Activated B cell treated with CpG ODN at 0.5 μM for 24 hours (primary cell): ENCODE measurements at regions of chr1 and their contacts with region 1.

Region 1: DNA sequence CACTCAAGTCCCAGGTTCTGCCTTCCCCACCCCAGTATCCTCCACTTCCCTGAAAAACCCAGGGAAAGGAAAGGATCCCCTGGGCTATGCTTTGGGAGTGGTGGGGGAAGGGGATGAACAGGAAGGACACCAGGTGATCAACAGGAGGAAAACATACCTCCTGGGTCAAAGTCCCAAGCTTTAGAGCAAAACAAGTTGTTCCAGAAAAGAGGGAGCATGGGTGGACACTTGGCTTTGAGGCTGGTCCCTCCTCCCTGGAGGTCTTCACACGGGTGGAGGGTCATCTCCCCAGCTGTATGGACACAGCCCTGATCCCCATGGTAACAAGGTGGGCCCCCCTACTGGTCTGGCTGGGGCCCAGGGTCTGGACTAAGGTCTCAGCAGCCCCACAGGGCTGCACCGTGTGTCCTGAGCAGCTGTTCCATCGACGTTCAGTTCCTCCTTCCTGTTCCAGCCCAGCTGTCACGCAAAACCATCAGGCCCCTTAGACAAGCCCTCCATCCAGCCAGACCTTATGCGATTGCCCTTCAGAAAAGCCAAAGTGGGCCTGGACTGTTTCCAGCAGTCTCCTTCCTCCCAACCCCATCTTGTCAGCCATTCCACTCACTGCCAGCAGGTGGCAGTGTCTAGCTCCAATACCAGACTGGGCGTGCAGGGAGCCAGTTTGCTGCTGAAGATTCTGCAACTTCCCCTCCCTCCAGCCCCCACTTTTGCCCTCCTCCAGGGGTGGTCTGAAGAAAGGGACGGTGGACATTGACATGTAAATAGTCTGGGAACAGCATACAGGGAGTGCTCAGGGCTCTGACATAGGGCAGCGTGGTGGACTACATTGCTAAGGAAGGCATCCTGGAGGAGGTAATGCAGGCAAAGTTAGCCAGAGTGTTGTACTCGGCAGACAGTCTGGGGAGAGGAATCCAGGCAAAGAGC is 2.9 kb upstream of the PDZK1IP1 start:
- DNase-seq: peak; percentile 61
- ATAC-seq: peak; percentile 75
- H3K4me3 Mint-ChIP-seq: no peak overlapping the region
- H3K27ac Mint-ChIP-seq: no peak overlapping the region
- H3K4me1 Mint-ChIP-seq: no peaks in the 10 kb centered on the region
- H3K27me3 Mint-ChIP-seq: peaks cover 16% of the 10 kb centered on the region
- CTCF ChIP-seq: peak; percentile 18

Region 2: DNA sequence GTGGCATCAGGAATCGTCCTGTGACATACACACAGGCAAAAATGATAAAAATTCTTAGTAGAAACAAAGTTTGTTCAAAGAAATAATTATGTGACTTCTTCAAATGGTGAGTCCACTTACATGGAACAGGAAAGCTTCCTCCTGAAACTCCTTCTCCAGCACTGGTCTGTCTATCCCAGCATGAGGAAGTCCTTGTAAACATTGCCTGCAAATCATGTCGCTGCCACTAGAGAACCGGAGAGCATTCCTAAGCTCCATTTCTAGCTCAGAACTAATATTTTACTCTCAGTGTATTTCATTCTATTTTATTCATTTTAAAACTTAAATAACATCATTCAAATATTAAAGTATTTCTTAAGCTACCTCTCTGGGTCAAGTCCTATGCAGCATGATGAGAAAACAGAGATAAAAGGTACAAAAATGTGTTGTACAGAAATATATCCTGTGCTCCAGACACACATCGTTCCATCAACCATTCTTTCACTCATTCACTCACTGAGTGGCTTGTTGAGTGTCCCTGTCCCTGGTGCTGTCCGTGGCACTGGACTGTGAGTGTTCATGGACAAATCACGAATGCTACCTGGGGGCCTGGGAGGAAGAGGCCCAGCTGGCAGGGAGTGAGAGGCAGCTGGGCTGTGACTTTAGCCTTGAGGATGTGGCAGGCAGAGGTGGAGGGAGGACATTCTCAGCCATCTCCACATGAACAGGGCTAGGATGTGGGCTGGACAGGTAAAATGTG is 45.5 kb before region 1 on chr1:
- CTCF ChIA-PET with region 1: no interaction called
- POLR2A ChIA-PET with region 1: no interaction called
- intact Hi-C with region 1: no loop called
- DNase-seq: no peak
- ATAC-seq: no peak
- H3K4me3 Mint-ChIP-seq: no peak overlapping the region
- H3K27ac Mint-ChIP-seq: no peak overlapping the region
- H3K4me1 Mint-ChIP-seq: no peaks in the 10 kb centered on the region
- H3K27me3 Mint-ChIP-seq: peaks cover 15% of the 10 kb centered on the region
- CTCF ChIP-seq: no peak

Region 3: GRCh38 chr1:47262787-47263413 is 70.2 kb after region 1 on chr1:
- CTCF ChIA-PET with region 1: interaction called, 23 read pairs
- POLR2A ChIA-PET with region 1: no interaction called
- intact Hi-C with region 1: loop called (anchors 2 kb)
- DNase-seq: no peak
- ATAC-seq: no peak
- H3K4me3 Mint-ChIP-seq: no peak overlapping the region
- H3K27ac Mint-ChIP-seq: no peak overlapping the region
- H3K4me1 Mint-ChIP-seq: no peaks in the 10 kb centered on the region
- H3K27me3 Mint-ChIP-seq: no peaks in the 10 kb centered on the region
- CTCF ChIP-seq: no peak

Region 4: GRCh38 chr1:47424336-47424982 is 231.7 kb after region 1 on chr1:
- CTCF ChIA-PET with region 1: interaction called, 6 read pairs
- POLR2A ChIA-PET with region 1: no interaction called
- intact Hi-C with region 1: loop called (anchors 1 kb)
- DNase-seq: no peak
- ATAC-seq: no peak
- H3K4me3 Mint-ChIP-seq: no peak overlapping the region
- H3K27ac Mint-ChIP-seq: no peak overlapping the region
- H3K4me1 Mint-ChIP-seq: no peaks in the 10 kb centered on the region
- H3K27me3 Mint-ChIP-seq: peaks cover 44% of the 10 kb centered on the region
- CTCF ChIP-seq: no peak

Region 5: DNA sequence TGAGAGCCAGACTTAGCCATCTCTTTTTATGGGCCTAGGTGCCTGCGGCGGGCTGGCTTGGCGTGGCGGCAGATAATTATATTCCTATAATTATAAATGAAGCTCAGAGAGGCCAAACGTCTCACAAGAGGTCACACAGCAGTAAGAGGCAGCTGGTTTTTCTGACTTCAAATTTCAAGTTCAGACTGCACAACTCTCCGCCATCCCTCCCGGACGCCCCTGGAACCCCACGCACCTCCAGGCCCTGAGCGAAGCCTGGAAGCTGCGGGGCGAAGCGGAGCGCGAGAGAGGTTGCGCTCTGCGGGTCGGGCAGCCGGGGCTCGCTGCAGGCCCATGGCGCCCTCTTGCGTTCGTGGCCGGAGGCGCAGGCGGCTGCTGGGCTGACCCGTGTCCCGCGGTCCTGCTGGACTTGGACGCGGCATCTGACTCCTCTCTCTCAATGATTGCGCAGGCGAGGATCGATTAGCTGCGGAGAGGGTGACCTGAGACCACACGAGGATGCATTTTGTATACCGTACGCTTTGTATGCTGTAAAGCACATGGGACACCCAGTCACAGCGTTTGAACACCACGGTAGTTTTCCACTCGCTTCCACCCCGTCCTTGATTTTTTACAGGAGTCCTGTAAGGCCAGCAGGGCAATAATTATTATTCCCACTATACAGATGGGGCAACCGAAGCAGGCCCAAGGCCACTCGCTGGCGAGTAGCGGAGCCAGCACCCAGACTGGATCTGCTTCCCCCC is 517.8 kb after region 1 on chr1:
- CTCF ChIA-PET with region 1: interaction called, 16 read pairs
- POLR2A ChIA-PET with region 1: no interaction called
- intact Hi-C with region 1: loop called (anchors 1 kb)
- DNase-seq: peak; percentile 56
- ATAC-seq: peak; percentile 52
- H3K4me3 Mint-ChIP-seq: no peak overlapping the region
- H3K27ac Mint-ChIP-seq: no peak overlapping the region
- H3K4me1 Mint-ChIP-seq: peaks cover 15% of the 10 kb centered on the region
- H3K27me3 Mint-ChIP-seq: peaks cover 62% of the 10 kb centered on the region
- CTCF ChIP-seq: peak; percentile 57

Region 6: DNA sequence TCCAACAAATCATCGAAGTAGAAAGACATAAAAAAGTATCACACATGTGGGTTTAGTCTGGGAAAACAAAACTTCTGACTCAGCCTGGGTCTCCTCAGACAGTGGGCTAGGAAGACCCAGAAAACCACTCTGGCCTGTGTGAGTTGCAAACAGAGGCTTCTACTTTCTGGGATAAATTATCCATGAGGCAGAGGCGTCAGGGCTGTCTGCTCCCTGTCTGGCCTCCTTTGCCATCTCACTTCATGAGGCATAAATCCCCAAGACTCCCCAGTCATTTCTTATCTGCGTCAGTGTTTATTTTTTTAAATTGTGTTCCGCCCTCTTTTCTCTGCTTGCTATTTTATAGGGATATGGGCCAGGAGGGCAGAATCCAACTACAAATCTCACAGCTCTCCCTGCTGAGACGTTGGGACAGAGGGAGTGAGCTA is 885.1 kb after region 1 on chr1:
- CTCF ChIA-PET with region 1: no interaction called
- POLR2A ChIA-PET with region 1: no interaction called
- intact Hi-C with region 1: no loop called
- DNase-seq: no peak
- ATAC-seq: no peak
- H3K4me3 Mint-ChIP-seq: no peak overlapping the region
- H3K27ac Mint-ChIP-seq: no peak overlapping the region
- H3K4me1 Mint-ChIP-seq: peaks cover 3% of the 10 kb centered on the region
- H3K27me3 Mint-ChIP-seq: peaks cover 5% of the 10 kb centered on the region
- CTCF ChIP-seq: no peak

Region 7: GRCh38 chr1:48236716-48237470 is 1044.2 kb after region 1 on chr1:
- CTCF ChIA-PET with region 1: no interaction called
- POLR2A ChIA-PET with region 1: no interaction called
- intact Hi-C with region 1: loop called (anchors 5 kb)
- DNase-seq: no peak
- ATAC-seq: no peak
- H3K4me3 Mint-ChIP-seq: no peak overlapping the region
- H3K27ac Mint-ChIP-seq: no peak overlapping the region
- H3K4me1 Mint-ChIP-seq: peaks cover 15% of the 10 kb centered on the region
- H3K27me3 Mint-ChIP-seq: no peaks in the 10 kb centered on the region
- CTCF ChIP-seq: no peak